Psoas muscle (tissue), 8 donors: ENCODE measurements at regions of chr12 and their contacts with region 1.

Region 1: GRCh38 chr12:6171409-6172015 is 28.7 kb upstream of the CD9 start:
- DNase-seq: peak; percentile 47 to 71
- ATAC-seq: peak; percentile 38 to 64 (median 50)
- H3K4me3 ChIP-seq: no peak overlapping the region
- H3K27ac ChIP-seq: peak overlapping the region; percentile 46
- H3K4me1 ChIP-seq: peaks cover 21% of the 10 kb centered on the region
- H3K27me3 ChIP-seq: no peaks in the 10 kb centered on the region
- CTCF ChIP-seq: no peak

Region 2: GRCh38 chr12:5643266-5643665 is 528.2 kb before region 1 on chr12:
- intact Hi-C with region 1: no loop called
- DNase-seq: no peak
- ATAC-seq: no peak
- H3K4me3 ChIP-seq: no peak overlapping the region
- H3K27ac ChIP-seq: no peak overlapping the region
- H3K4me1 ChIP-seq: no peaks in the 10 kb centered on the region
- H3K27me3 ChIP-seq: peaks cover 0 to 7% (median 0%) of the 10 kb centered on the region in 3 donors
- CTCF ChIP-seq: no peak

Region 3: GRCh38 chr12:6116175-6117021 is 55.1 kb before region 1 on chr12:
- intact Hi-C with region 1: loop called in 1 of 2 experiments (anchors 5 kb)
- DNase-seq: peak; percentile 30 to 67
- ATAC-seq: peak in 3 of 4 donors; percentile 41 to 62 (median 62)
- H3K4me3 ChIP-seq: peak overlapping the region; percentile 18
- H3K27ac ChIP-seq: peak overlapping the region; percentile 53
- H3K4me1 ChIP-seq: no peaks in the 10 kb centered on the region
- H3K27me3 ChIP-seq: no peaks in the 10 kb centered on the region
- CTCF ChIP-seq: no peak

Region 4: GRCh38 chr12:6154730-6155459 is 16.6 kb before region 1 on chr12:
- intact Hi-C with region 1: no loop called
- DNase-seq: peak; percentile 66 to 86
- ATAC-seq: peak; percentile 39 to 75 (median 62)
- H3K4me3 ChIP-seq: no peak overlapping the region
- H3K27ac ChIP-seq: peak overlapping the region; percentile 73
- H3K4me1 ChIP-seq: no peaks in the 10 kb centered on the region
- H3K27me3 ChIP-seq: peaks cover 0 to 2% (median 0%) of the 10 kb centered on the region in 3 donors
- CTCF ChIP-seq: no peak

Region 5: GRCh38 chr12:6250343-6250742 is 78.8 kb after region 1 on chr12:
- intact Hi-C with region 1: no loop called
- DNase-seq: no peak
- ATAC-seq: peak in 2 of 4 donors; percentile 23 to 27
- H3K4me3 ChIP-seq: no peak overlapping the region
- H3K27ac ChIP-seq: no peak overlapping the region
- H3K4me1 ChIP-seq: no peaks in the 10 kb centered on the region
- H3K27me3 ChIP-seq: no peaks in the 10 kb centered on the region
- CTCF ChIP-seq: no peak